ENCODE measurements at regions of chr11 and their contacts with region 1.

Region 1: DNA sequence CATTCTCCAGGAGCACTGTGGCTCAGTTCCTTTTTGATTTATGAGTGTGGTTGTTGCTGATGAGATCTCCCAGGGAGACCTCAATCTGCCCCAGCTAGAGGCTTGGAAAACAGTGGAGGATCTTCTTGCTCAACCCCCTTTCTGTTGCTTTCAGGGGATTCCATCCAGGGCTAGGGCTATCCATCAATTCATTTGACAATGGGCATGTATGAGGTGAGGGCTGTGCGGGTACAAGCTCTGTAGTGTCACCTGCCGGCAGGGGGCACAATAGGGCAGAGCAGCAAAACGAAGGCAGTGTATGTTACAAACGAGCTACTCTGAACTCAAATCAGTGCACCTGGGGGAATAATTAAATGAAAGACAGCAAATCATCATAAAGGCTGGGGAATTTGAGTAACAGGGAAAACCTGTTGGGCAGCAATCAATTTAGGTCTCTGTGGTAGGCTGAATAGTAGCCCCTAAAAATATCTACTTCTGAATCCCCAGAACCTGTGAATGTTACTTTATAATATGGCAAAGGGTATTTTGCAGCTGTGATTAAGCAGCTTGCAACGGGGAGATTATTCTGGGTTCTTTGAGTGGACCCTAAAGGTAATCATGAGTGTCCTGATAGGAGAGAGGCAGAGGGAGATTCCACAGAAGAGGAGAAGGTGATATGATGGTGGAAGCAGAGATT is 170.3 kb upstream of the ZBED5 start:
- DNase-seq: peak; percentile 59 to 88 (median 82)
- ATAC-seq: peak; percentile 87
- H3K4me3 ChIP-seq: no peak overlapping the region
- H3K4me1 ChIP-seq: no peaks in the 10 kb centered on the region
- CTCF ChIP-seq: peak; percentile 54

Region 2: GRCh38 chr11:11787305-11788062 is 759.3 kb after region 1 on chr11:
- intact Hi-C with region 1: loop called in 1 of 2 experiments (anchors 10 kb)
- DNase-seq: peak in 2 of 3 donors; percentile 76 to 83
- ATAC-seq: peak; percentile 91
- H3K4me3 ChIP-seq: no peak overlapping the region
- H3K4me1 ChIP-seq: no peaks in the 10 kb centered on the region
- CTCF ChIP-seq: peak; percentile 75

Measured in mucosa of descending colon (tissue), 3 donors.